SK-N-SH (cell line): ENCODE measurements at regions of chr10 and their contacts with region 1.

Region 1: GRCh38 chr10:118568327-118568848 is 27.1 kb downstream of the PRLHR start:
- DNase-seq: peak; percentile 63
- H3K4me3 ChIP-seq: no peak overlapping the region; a peak in 1 of 4 replicates
- H3K27ac ChIP-seq: no peak overlapping the region
- H3K4me1 ChIP-seq: peaks cover 0 to 29% of the 10 kb centered on the region in 2 experiments; a peak in 2 of 4 replicates
- H3K27me3 ChIP-seq: no peaks in the 10 kb centered on the region
- CTCF ChIP-seq: peak; percentile 76
- EP300 ChIP-seq: no peak
- RAD21 ChIP-seq: peak; percentile 88

Region 2: GRCh38 chr10:117741524-117741923 is 826.9 kb before region 1 on chr10:
- CTCF ChIA-PET with region 1: no interaction called
- POLR2A ChIA-PET with region 1: no interaction called
- DNase-seq: no peak
- H3K4me3 ChIP-seq: no peak overlapping the region
- H3K27ac ChIP-seq: no peak overlapping the region
- H3K4me1 ChIP-seq: peaks cover 0 to 2% of the 10 kb centered on the region in 2 experiments; a peak in 1 of 4 replicates
- H3K27me3 ChIP-seq: no peaks in the 10 kb centered on the region
- CTCF ChIP-seq: no peak
- EP300 ChIP-seq: no peak
- RAD21 ChIP-seq: no peak

Region 3: GRCh38 chr10:118584181-118584954 is 16.0 kb after region 1 on chr10:
- CTCF ChIA-PET with region 1: interaction called, 30 read pairs
- POLR2A ChIA-PET with region 1: no interaction called
- DNase-seq: no peak
- H3K4me3 ChIP-seq: no peak overlapping the region
- H3K27ac ChIP-seq: no peak overlapping the region
- H3K4me1 ChIP-seq: no peaks in the 10 kb centered on the region; a peak in 1 of 4 replicates
- H3K27me3 ChIP-seq: no peaks in the 10 kb centered on the region; the same call in 1 of the 2 replicates
- CTCF ChIP-seq: no peak
- EP300 ChIP-seq: no peak
- RAD21 ChIP-seq: no peak

Region 4: GRCh38 chr10:118610577-118610976 is 42.2 kb after region 1 on chr10:
- CTCF ChIA-PET with region 1: interaction called, 19 read pairs
- POLR2A ChIA-PET with region 1: no interaction called
- DNase-seq: peak; percentile 55
- H3K4me3 ChIP-seq: no peak overlapping the region
- H3K27ac ChIP-seq: peak overlapping the region in 1 of 2 experiments; percentile 76; a peak in 2 of 4 replicates
- H3K4me1 ChIP-seq: peaks cover 0 to 34% of the 10 kb centered on the region in 2 experiments; a peak in 2 of 4 replicates
- H3K27me3 ChIP-seq: no peaks in the 10 kb centered on the region; the same call in 1 of the 2 replicates
- CTCF ChIP-seq: no peak
- EP300 ChIP-seq: peak in 1 of 2 experiments; percentile 58; a peak in 1 of 4 replicates
- RAD21 ChIP-seq: no peak

Region 5: GRCh38 chr10:118712930-118713634 is 144.7 kb after region 1 on chr10:
- CTCF ChIA-PET with region 1: interaction called, 58 read pairs
- POLR2A ChIA-PET with region 1: no interaction called
- DNase-seq: peak; percentile 36
- H3K4me3 ChIP-seq: no peak overlapping the region
- H3K27ac ChIP-seq: no peak overlapping the region; a peak in 1 of 4 replicates
- H3K4me1 ChIP-seq: no peaks in the 10 kb centered on the region; a peak in 1 of 4 replicates
- H3K27me3 ChIP-seq: no peaks in the 10 kb centered on the region
- CTCF ChIP-seq: peak; percentile 36; the same call in 1 of the 2 replicates
- EP300 ChIP-seq: no peak
- RAD21 ChIP-seq: peak; percentile 60

Region 6: GRCh38 chr10:118732245-118733165 is 164.1 kb after region 1 on chr10:
- CTCF ChIA-PET with region 1: interaction called, 226 read pairs
- POLR2A ChIA-PET with region 1: no interaction called
- DNase-seq: no peak
- H3K4me3 ChIP-seq: no peak overlapping the region
- H3K27ac ChIP-seq: no peak overlapping the region
- H3K4me1 ChIP-seq: peaks cover 7 to 19% of the 10 kb centered on the region in 2 experiments; a peak in 3 of 4 replicates
- H3K27me3 ChIP-seq: no peaks in the 10 kb centered on the region
- CTCF ChIP-seq: no peak
- EP300 ChIP-seq: no peak
- RAD21 ChIP-seq: no peak

Region 7: DNA sequence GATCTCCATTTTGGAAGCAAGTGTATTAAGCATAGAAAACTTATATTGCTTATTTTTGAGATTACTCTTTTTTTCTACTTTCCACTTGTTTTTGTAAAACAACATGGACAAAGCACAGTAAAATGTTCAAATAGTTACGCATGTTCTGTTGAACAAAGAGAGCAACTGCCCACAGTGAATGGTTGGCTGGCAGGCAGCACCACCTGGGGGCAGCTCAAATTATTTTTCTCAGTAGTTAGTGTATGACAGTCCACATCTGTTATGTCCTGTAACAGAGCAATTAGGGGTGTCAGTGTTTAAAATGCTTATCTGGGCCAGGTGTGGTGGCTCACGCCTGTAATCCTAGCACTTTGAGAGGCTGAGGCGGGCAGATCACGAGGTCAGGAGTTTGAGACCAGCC is 232.5 kb after region 1 on chr10:
- CTCF ChIA-PET with region 1: interaction called, 55 read pairs
- POLR2A ChIA-PET with region 1: no interaction called
- DNase-seq: peak; percentile 68
- H3K4me3 ChIP-seq: no peak overlapping the region
- H3K27ac ChIP-seq: no peak overlapping the region
- H3K4me1 ChIP-seq: no peaks in the 10 kb centered on the region; a peak in 1 of 4 replicates
- H3K27me3 ChIP-seq: no peaks in the 10 kb centered on the region
- CTCF ChIP-seq: peak; percentile 46
- EP300 ChIP-seq: no peak
- RAD21 ChIP-seq: peak; percentile 88